Naive thymus-derived CD4-positive, alpha-beta T cell (primary cell): ENCODE measurements at regions of chr22 and their contacts with region 1.

Region 1: DNA sequence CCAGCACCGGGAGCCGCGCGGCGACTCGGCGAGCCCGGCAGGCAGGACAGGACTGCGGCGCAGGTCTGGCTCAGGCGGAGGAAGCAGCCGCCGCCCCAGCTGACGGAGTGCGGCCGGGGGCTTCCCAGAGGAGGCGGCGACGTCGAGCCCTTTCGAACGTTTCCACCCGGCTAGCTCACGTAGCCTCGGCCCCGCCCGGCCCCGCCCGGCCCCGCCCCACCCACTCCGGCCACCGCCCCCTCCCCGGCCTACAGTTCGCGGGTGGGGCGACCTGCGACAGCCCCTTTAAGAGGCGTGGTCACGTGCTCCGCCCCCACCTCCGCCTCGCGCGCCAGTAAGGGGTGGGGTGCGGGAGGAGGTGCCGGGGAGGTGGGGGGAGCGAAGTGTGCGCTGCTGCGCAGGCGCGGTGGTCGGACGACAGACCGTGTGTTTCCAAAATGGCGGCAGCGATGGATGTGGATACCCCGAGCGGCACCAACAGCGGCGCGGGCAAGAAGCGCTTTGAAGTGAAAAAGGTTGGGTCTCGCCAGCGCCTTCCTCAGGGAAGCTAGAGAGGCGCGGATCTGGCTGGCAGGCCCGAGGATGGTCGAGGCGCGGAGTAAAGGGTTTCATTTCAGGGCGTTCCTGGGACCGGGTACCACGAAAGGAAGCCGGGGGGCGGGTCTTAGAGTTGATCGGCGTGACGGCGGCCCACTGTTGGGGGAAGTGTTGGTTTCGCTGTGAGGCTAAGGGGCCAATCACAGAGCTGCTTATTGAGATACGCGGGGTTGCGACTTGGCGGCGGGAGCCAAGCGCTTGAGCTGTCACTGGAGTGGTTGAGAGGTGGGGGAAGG is at the start of gene RBX1:
- DNase-seq: peak; percentile 96 to 100 (median 99)
- ATAC-seq: peak; percentile 92
- H3K4me3 ChIP-seq: peak within 1 kb of the TSS; percentile 98
- H3K4me3 Mint-ChIP-seq: peak within 1 kb of the TSS; percentile 91 to 99 (median 98)
- H3K27ac ChIP-seq: peak within 1 kb of the TSS; percentile 99
- H3K27ac Mint-ChIP-seq: peak within 1 kb of the TSS; percentile 96 to 100 (median 99)
- H3K4me1 ChIP-seq: peaks cover 16 to 19% of the 10 kb centered on the region in 2 donors
- H3K4me1 Mint-ChIP-seq: peaks cover 20 to 43% (median 39%) of the 10 kb centered on the region in 7 donors
- H3K27me3 ChIP-seq: no peaks in the 10 kb centered on the region
- H3K27me3 Mint-ChIP-seq: no peaks in the 10 kb centered on the region
- total RNA-seq, gene RBX1: 28.9 to 91.3 (median 32.7) TPM

Region 2: GRCh38 chr22:40911772-40912171 is 39.4 kb before region 1 on chr22:
- CTCF ChIA-PET with region 1: no interaction called
- POLR2A ChIA-PET with region 1: no interaction called
- intact Hi-C with region 1: no loop called
- DNase-seq: no peak
- ATAC-seq: no peak
- H3K4me3 ChIP-seq: no peak overlapping the region
- H3K4me3 Mint-ChIP-seq: no peak overlapping the region
- H3K27ac ChIP-seq: no peak overlapping the region
- H3K27ac Mint-ChIP-seq: no peak overlapping the region
- H3K4me1 ChIP-seq: no peaks in the 10 kb centered on the region
- H3K4me1 Mint-ChIP-seq: no peaks in the 10 kb centered on the region
- H3K27me3 ChIP-seq: no peaks in the 10 kb centered on the region
- H3K27me3 Mint-ChIP-seq: no peaks in the 10 kb centered on the region

Region 3: DNA sequence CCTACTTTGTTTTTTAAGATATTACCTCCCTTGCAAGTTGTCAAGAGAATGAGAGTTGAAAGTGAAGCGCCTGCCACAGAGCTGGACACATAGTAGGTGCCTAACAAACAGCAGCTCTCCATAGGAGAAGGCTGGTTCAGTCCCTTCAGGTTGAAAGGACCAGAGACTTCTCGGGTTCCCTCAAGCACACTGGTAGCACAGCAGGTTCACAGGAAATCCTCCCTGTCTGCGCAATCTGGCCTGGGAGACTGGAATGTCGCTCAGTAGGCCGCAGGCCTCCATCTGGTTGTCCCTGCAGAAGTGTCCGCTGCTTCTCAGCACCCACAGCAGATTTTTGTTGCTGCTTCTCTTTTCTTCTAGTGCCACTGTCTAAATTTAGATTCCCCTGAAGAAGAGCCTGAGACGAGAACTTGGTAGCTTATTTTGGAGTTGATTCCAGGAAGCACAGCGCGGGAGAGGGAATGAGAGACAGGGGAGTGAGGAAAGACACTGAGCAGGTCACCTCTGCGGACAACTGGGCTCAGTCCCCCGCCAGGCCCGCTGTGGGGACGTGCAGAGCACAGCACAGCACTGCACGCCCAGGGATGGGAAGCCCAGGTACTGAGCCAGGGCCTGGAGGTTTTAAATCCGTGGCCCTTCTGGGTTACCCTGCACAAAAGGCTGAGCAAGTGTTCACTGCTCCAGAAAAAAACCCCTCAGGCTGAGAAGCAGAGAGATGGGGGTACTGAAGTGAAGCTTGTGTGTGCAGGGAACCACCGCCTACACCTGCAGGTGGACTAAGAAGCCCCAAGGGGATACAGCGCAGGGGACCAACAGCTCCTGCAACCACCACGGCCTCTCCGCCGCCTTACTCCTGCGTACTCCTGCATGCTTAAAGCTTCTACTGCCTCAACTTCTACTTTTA is 31.6 kb after region 1 on chr22:
- CTCF ChIA-PET with region 1: no interaction called
- POLR2A ChIA-PET with region 1: no interaction called
- intact Hi-C with region 1: no loop called
- DNase-seq: no peak
- ATAC-seq: no peak
- H3K4me3 ChIP-seq: no peak overlapping the region
- H3K4me3 Mint-ChIP-seq: no peak overlapping the region
- H3K27ac ChIP-seq: no peak overlapping the region
- H3K27ac Mint-ChIP-seq: no peak overlapping the region
- H3K4me1 ChIP-seq: no peaks in the 10 kb centered on the region
- H3K4me1 Mint-ChIP-seq: peaks cover 0 to 2% (median 0%) of the 10 kb centered on the region in 7 donors
- H3K27me3 ChIP-seq: no peaks in the 10 kb centered on the region
- H3K27me3 Mint-ChIP-seq: no peaks in the 10 kb centered on the region

Region 4: DNA sequence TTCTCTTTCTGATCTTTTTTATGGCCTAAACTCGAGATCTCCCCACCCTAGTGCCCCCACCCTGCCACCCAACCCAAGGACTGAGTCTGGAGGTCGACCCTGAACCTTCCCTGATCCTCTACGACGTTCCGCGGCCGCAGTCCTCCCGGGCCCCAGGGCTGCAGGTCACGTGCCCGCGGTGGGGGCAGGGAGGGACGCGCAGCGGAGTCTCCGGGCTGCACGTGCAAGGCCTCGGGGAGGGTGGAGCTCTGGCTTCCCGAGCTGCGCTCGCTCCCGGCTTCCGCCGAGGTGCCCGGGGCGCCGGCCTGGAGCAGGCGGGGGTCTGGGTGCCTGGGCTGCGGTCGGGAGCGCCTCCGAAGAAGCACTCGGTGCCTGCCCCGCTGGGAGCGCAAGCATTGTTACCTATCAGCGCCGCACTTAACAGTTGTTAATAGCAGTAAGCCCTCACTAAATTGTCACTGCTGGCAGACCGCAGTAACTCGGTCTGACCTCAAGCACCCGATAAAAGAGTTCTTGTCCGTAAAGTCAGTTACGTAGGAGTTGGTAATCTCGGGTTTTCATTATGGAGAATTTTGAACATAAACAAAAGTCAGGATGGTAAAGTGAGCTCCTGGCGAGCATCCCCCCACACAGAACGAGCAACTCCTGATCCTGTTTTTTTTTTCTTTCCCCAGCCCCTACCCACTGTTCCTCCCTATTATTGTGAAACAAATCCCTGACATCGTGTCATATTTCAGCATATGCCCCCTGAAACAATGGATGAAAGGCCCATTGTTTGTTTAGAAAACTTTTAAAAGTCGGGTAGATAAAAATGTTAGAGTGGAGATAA is 71.5 kb after region 1 on chr22:
- CTCF ChIA-PET with region 1: no interaction called
- POLR2A ChIA-PET with region 1: interaction called, 43 read pairs
- intact Hi-C with region 1: loop called (anchors 1 kb)
- DNase-seq: peak; percentile 69 to 83 (median 74)
- ATAC-seq: peak; percentile 89
- H3K4me3 ChIP-seq: peak overlapping the region; percentile 57
- H3K4me3 Mint-ChIP-seq: peak overlapping the region; percentile 75 to 91 (median 84)
- H3K27ac ChIP-seq: peak overlapping the region; percentile 82
- H3K27ac Mint-ChIP-seq: peak overlapping the region; percentile 74 to 91 (median 88)
- H3K4me1 ChIP-seq: peaks cover 12 to 13% of the 10 kb centered on the region in 2 donors
- H3K4me1 Mint-ChIP-seq: peaks cover 12 to 23% (median 21%) of the 10 kb centered on the region in 7 donors
- H3K27me3 ChIP-seq: no peaks in the 10 kb centered on the region
- H3K27me3 Mint-ChIP-seq: peaks cover 0 to 14% (median 0%) of the 10 kb centered on the region in 5 donors

Region 5: DNA sequence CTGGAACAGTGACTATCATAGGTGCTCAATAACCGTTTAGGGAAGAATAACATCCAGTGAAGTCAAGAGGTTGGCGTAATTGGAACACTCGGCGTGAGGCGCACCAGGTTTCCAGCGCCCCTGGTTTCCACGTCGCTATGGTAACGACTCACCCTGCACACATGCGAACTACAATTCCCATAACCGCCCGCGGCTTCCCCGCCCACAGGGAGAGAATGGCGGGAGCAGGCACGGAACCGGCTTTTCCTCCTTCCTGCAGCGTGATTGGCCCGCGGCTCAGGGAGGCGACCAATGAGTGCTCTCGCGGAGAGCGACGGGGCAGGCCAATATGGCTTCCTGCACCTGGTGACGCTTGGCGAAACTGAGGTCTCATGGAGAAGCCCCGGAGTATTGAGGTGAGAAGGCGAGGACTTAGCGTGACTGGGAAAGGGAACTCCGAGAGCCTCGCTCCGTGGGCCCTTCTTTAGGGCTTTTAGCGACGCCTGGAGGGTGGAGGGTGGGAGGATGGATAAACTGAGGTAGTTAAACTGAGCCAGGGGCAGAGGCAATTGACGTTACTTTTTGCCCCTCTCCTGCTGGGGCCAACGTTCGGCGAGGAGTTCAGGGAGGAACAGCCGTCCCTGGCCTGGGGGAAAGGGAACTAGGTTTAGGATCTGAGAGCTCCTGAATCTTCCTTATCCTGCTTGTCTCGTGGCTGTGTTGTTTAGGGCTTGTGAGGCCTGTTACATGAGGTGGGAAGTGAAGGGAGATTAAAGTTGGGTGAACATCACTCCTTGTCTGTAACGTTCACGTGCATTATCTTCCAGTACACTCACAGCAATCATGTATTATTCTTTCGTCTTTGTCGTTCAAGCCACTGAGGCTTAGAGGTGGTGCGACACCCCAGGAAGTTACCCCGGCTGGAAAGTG is 254.1 kb after region 1 on chr22 and contains the start of gene L3MBTL2:
- CTCF ChIA-PET with region 1: no interaction called
- POLR2A ChIA-PET with region 1: interaction called, 3 read pairs
- intact Hi-C with region 1: loop called (anchors 1 kb)
- DNase-seq: peak; percentile 89 to 99 (median 97)
- ATAC-seq: peak; percentile 100
- H3K4me3 ChIP-seq: peak within 1 kb of the TSS; percentile 94
- H3K4me3 Mint-ChIP-seq: peak within 1 kb of the TSS; percentile 87 to 100 (median 96)
- H3K27ac ChIP-seq: peak within 1 kb of the TSS; percentile 85
- H3K27ac Mint-ChIP-seq: peak within 1 kb of the TSS; percentile 88 to 98 (median 92)
- H3K4me1 ChIP-seq: peaks cover 4 to 10% of the 10 kb centered on the region in 2 donors
- H3K4me1 Mint-ChIP-seq: peaks cover 10 to 40% (median 36%) of the 10 kb centered on the region in 7 donors
- H3K27me3 ChIP-seq: no peaks in the 10 kb centered on the region
- H3K27me3 Mint-ChIP-seq: peaks cover 0 to 26% (median 0%) of the 10 kb centered on the region in 5 donors
- total RNA-seq, gene L3MBTL2: 31.6 to 45.9 (median 43.3) TPM

Region 6: GRCh38 chr22:41468381-41469217 is 517.4 kb after region 1 on chr22 and contains the starts of genes ACO2 and PHF5A:
- CTCF ChIA-PET with region 1: no interaction called
- POLR2A ChIA-PET with region 1: interaction called, 4 read pairs
- intact Hi-C with region 1: loop called in 1 of 2 experiments (anchors 1 kb)
- DNase-seq: peak; percentile 93 to 99 (median 98)
- ATAC-seq: peak; percentile 96
- H3K4me3 ChIP-seq: peak within 1 kb of the TSS; percentile 76
- H3K4me3 Mint-ChIP-seq: peak within 1 kb of the TSS; percentile 88 to 94 (median 91)
- H3K27ac ChIP-seq: peak within 1 kb of the TSS; percentile 89
- H3K27ac Mint-ChIP-seq: peak within 1 kb of the TSS; percentile 98 to 100 (median 99)
- H3K4me1 ChIP-seq: peaks cover 19 to 20% of the 10 kb centered on the region in 2 donors
- H3K4me1 Mint-ChIP-seq: peaks cover 18 to 75% (median 59%) of the 10 kb centered on the region in 7 donors
- H3K27me3 ChIP-seq: no peaks in the 10 kb centered on the region
- H3K27me3 Mint-ChIP-seq: no peaks in the 10 kb centered on the region
- total RNA-seq, gene ACO2: 64.5 to 84.8 (median 70.3) TPM
- total RNA-seq, gene PHF5A: 27.8 to 63.9 (median 36.0) TPM

Region 7: DNA sequence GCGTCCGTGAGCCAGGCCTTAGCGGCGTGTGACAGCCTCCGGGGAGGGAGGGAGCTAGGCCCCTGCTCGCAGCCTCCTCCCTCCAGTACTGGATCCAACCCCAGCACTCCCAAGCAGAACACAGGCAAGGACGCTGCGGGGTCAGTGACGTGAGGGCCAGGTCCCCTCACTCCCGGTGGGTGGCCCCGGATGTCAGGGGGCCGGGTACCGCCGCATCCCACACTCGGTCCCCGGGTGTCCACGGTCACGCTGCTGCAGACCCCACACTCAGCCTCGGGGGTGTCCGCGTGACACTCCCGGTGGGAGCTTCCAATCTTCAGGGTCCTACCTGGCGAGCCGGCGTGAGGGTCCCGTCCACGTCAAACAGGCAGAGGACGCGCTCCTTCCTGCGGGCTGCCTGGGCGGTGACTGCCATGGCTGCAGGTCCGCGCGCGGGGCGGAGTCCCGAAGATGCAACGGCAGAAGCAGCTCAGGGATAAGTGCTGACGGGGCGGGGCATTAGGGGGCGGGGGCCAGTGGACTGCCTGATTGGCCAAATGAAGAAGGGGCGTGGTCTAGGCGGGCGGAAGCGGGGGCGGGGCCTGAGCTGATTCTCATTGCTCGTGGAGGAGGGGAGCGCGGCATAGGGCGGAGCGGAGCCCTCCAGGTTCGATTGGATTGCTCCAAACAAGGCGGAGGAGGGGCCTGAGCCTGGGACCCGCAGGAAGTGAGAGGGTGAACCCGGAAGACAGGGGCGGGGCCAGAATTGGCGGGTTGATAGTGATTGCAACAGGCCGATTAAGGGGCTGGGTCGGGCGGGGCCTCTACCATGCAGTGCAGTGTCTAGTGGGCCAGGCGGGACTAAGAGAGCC is 638.4 kb after region 1 on chr22 and contains the start of gene PMM1:
- CTCF ChIA-PET with region 1: no interaction called
- POLR2A ChIA-PET with region 1: no interaction called
- intact Hi-C with region 1: loop called in 1 of 2 experiments (anchors 1 kb)
- DNase-seq: peak; percentile 97 to 100 (median 100)
- ATAC-seq: peak; percentile 99
- H3K4me3 ChIP-seq: peak within 1 kb of the TSS; percentile 97
- H3K4me3 Mint-ChIP-seq: peak within 1 kb of the TSS; percentile 76 to 96 (median 93)
- H3K27ac ChIP-seq: peak within 1 kb of the TSS; percentile 79
- H3K27ac Mint-ChIP-seq: peak within 1 kb of the TSS; percentile 81 to 93 (median 86)
- H3K4me1 ChIP-seq: peaks cover 9 to 11% of the 10 kb centered on the region in 2 donors
- H3K4me1 Mint-ChIP-seq: peaks cover 5 to 28% (median 22%) of the 10 kb centered on the region in 7 donors
- H3K27me3 ChIP-seq: no peaks in the 10 kb centered on the region
- H3K27me3 Mint-ChIP-seq: no peaks in the 10 kb centered on the region
- total RNA-seq, gene PMM1: 22.5 to 34.3 (median 26.9) TPM